CD4-positive, alpha-beta memory T cell (primary cell): ENCODE measurements at regions of chr16 and their contacts with region 1.

Region 1: GRCh38 chr16:31073968-31074813 is at the starts of genes ZNF646 and ZNF668:
- DNase-seq: peak; percentile 94 to 99 (median 98)
- H3K4me3 ChIP-seq: peak within 1 kb of the TSS; percentile 81 to 86
- H3K4me3 Mint-ChIP-seq: peak within 1 kb of the TSS; percentile 92 to 99 (median 97)
- H3K27ac ChIP-seq: peak within 1 kb of the TSS; percentile 87
- H3K27ac Mint-ChIP-seq: peak within 1 kb of the TSS; percentile 93 to 99 (median 98)
- H3K4me1 ChIP-seq: peaks cover 27% of the 10 kb centered on the region
- H3K4me1 Mint-ChIP-seq: peaks cover 20 to 58% (median 30%) of the 10 kb centered on the region in 4 donors
- H3K27me3 ChIP-seq: no peaks in the 10 kb centered on the region
- H3K27me3 Mint-ChIP-seq: peaks cover 0 to 2% of the 10 kb centered on the region in 2 donors
- total RNA-seq, gene ZNF646: 46.9 to 47.0 TPM
- total RNA-seq, gene ZNF668: 11.7 to 13.6 TPM

Region 2: DNA sequence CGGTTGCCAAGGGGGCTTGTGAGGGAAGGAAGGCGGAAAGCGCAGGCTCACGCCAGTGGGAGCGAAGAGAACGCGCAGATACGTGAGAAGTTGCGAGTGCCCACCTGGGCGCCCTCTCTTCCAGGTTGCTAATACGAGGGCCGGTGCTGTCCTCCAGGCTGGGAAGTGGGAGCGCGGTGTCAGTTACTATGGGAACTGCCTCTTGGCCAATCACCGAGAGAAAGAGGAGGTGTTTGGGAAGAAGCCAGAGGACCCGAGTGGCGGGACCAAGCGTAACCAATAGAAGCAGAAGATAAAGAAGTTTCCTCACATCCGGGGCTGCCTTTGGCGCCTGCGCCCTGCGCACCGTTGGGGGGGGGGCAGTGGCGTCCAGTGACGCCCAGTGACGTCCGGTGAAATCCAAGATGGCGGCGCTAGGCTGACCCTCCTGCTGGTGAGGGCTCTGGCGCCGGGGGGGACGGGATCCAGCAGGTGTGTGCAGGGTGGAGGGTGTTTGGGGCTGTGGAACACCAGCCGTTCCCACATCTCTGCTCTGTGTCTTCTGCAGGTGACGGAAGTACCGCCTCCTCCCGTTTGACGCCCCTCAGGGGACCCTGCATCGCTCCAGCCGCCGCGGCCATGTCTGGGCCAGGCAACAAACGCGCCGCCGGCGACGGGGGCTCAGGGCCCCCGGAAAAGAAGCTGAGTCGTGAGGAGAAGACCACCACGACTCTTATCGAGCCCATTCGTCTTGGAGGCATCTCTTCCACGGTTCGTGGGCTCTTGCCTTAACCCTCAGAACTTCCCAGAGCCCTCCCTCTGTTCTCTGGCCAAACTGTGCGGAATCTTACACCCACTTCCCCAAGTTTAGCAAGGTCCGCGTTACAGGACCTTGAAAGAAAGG is 312.0 kb before region 1 on chr16 and contains the starts of genes CFAP119 and RNF40:
- CTCF ChIA-PET with region 1: no interaction called
- POLR2A ChIA-PET with region 1: interaction called, 3 read pairs
- intact Hi-C with region 1: loop called (anchors 1 kb)
- DNase-seq: peak; percentile 89 to 94 (median 91)
- H3K4me3 ChIP-seq: peak within 1 kb of the TSS; percentile 73 to 97
- H3K4me3 Mint-ChIP-seq: peak within 1 kb of the TSS; percentile 94 to 98 (median 97)
- H3K27ac ChIP-seq: peak within 1 kb of the TSS; percentile 71
- H3K27ac Mint-ChIP-seq: peak within 1 kb of the TSS; percentile 94 to 97 (median 96)
- H3K4me1 ChIP-seq: peaks cover 30% of the 10 kb centered on the region
- H3K4me1 Mint-ChIP-seq: peaks cover 11 to 38% (median 27%) of the 10 kb centered on the region in 4 donors
- H3K27me3 ChIP-seq: no peaks in the 10 kb centered on the region
- H3K27me3 Mint-ChIP-seq: no peaks in the 10 kb centered on the region
- total RNA-seq, gene CFAP119: 2.6 to 3.4 TPM
- total RNA-seq, gene RNF40: 101 to 109 TPM

Region 3: DNA sequence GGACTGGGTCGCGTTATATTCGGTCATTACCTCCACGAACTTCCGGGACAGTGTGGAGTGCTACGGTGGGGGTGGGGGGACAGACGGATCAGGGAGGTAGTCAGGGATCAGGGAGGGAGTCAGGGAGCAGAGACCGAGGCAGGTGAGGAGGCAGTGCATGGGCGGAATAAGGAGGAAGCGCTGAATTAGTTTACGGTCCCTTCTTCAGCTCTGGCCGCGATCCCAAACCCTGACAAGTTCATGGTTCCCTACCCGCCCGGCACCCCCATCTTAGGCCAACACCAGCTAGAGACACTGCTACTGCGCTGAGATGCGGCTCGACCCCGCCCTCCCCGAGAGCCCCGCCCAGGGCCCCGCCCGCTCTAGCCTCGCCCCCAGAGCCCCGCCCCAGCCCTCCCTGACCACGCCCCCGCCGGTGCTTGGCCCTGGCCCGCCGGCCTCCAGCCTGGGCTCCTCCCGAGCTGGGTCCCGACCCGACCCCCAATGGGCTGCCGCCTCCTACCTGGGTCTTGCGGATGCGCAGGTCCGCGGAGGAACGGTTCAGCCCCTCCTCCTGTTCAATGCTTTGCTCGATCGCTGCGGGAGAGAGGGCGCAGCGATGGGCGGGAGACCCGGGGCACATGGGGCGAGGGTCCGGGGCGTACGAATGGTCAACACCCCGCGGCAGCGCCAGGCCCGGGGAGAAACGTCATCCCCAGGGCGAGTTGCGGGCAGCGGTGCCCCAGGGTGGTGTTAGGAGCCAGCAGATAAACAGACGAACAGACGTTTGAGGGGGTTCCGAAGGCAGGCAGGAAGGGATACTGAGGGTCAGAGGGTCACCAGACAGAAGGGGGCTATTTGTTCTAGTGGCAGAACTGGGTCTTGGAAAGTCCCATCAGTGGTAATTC is 76.9 kb before region 1 on chr16:
- CTCF ChIA-PET with region 1: no interaction called
- POLR2A ChIA-PET with region 1: interaction called, 5 read pairs
- intact Hi-C with region 1: loop called (anchors 1 kb)
- DNase-seq: peak; percentile 59 to 82 (median 66)
- H3K4me3 ChIP-seq: peak overlapping the region; percentile 60 to 69
- H3K4me3 Mint-ChIP-seq: peak overlapping the region; percentile 67 to 86 (median 82)
- H3K27ac ChIP-seq: peak overlapping the region; percentile 47
- H3K27ac Mint-ChIP-seq: peak overlapping the region in 6 of 7 donors; percentile 54 to 89 (median 85)
- H3K4me1 ChIP-seq: peaks cover 11% of the 10 kb centered on the region
- H3K4me1 Mint-ChIP-seq: peaks cover 2 to 6% (median 4%) of the 10 kb centered on the region in 4 donors
- H3K27me3 ChIP-seq: no peaks in the 10 kb centered on the region
- H3K27me3 Mint-ChIP-seq: no peaks in the 10 kb centered on the region

Region 4: DNA sequence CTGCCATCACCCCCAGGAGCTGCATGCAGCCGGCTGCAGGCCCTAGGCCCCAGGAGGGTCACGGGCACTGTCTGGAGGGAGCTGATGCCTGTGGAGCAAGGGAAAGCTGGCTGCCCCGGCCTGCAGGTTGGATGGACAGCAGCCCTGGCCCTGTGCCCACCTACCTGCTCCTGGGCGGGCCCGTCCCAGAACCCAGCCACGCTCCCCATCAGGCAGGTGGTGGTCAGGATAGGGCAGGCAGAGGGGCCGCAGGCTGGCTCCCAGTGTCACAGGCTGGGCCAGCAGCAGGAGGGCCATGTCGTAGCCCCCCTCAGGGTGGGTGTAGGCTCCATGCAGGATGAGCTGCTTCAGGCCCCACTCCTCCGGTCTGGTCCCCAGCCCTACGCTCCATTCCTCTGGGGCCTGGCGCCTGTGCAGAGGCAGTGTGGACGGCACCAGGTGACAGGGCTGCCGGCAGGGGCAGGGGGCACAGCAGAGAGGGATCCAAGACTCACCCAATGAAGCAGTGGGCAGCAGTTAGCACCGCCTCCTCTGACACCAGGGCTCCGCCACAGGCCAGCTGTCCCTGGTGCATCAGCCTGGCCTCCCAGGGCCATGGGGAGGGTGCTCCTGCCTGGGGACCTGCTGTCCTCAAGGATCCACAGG is 10.5 kb after region 1 on chr16:
- CTCF ChIA-PET with region 1: no interaction called
- POLR2A ChIA-PET with region 1: interaction called, 12 read pairs
- intact Hi-C with region 1: no loop called
- DNase-seq: no peak
- H3K4me3 ChIP-seq: no peak overlapping the region
- H3K4me3 Mint-ChIP-seq: no peak overlapping the region
- H3K27ac ChIP-seq: no peak overlapping the region
- H3K27ac Mint-ChIP-seq: no peak overlapping the region
- H3K4me1 ChIP-seq: peaks cover 10% of the 10 kb centered on the region
- H3K4me1 Mint-ChIP-seq: peaks cover 0 to 14% (median 8%) of the 10 kb centered on the region in 4 donors
- H3K27me3 ChIP-seq: no peaks in the 10 kb centered on the region
- H3K27me3 Mint-ChIP-seq: no peaks in the 10 kb centered on the region

Region 5: DNA sequence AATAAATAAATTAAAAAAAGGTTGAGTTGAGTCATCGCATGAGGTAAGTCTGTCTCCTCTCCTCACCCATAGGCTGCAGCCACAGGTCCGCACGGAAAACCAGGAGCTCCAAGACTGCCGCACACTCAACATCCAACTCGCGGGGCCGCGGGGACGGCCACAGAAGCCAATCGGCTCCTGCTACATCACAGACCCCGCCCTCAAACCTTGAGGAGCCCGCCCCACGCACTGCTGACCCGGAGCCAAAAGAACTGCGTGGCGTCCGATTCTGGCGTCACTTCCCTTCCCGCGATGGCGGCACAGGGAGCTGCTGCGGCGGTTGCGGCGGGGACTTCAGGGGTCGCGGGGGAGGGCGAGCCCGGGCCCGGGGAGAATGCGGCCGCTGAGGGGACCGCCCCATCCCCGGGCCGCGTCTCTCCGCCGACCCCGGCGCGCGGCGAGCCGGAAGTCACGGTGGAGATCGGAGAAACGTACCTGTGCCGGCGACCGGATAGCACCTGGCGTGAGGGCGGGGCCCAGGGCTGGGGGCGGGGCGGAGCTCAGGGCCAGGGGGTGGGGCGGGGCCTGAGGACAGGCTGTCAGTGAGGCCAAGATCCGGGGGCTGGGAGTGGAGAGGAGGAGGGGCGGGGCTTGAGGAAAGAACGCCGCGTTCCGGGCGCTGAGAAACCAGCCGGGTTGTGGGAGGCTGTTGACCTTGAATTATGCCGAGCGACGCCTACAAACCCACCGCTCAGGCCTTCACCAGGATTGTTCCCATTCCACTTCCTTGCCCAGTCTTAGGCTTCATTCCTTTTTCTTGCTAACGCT is 43.4 kb after region 1 on chr16 and contains the start of gene KAT8:
- CTCF ChIA-PET with region 1: interaction called, 6 read pairs
- POLR2A ChIA-PET with region 1: interaction called, 68 read pairs
- intact Hi-C with region 1: loop called (anchors 1 kb)
- DNase-seq: peak; percentile 98 to 99 (median 98)
- H3K4me3 ChIP-seq: peak within 1 kb of the TSS; percentile 63 to 76
- H3K4me3 Mint-ChIP-seq: peak within 1 kb of the TSS; percentile 83 to 93 (median 89)
- H3K27ac ChIP-seq: peak within 1 kb of the TSS; percentile 89
- H3K27ac Mint-ChIP-seq: peak within 1 kb of the TSS; percentile 80 to 98 (median 95)
- H3K4me1 ChIP-seq: peaks cover 11% of the 10 kb centered on the region
- H3K4me1 Mint-ChIP-seq: peaks cover 9 to 19% (median 13%) of the 10 kb centered on the region in 4 donors
- H3K27me3 ChIP-seq: no peaks in the 10 kb centered on the region
- H3K27me3 Mint-ChIP-seq: no peaks in the 10 kb centered on the region
- total RNA-seq, gene KAT8: 90.8 to 94.2 TPM

Region 6: GRCh38 chr16:31253642-31254045 is 179.5 kb after region 1 on chr16:
- CTCF ChIA-PET with region 1: no interaction called
- POLR2A ChIA-PET with region 1: no interaction called
- intact Hi-C with region 1: no loop called
- DNase-seq: no peak
- H3K4me3 ChIP-seq: no peak overlapping the region
- H3K4me3 Mint-ChIP-seq: no peak overlapping the region
- H3K27ac ChIP-seq: no peak overlapping the region
- H3K27ac Mint-ChIP-seq: peak overlapping the region in 4 of 7 donors; percentile 0 to 64 (median 30)
- H3K4me1 ChIP-seq: peaks cover 8% of the 10 kb centered on the region
- H3K4me1 Mint-ChIP-seq: peaks cover 11 to 21% (median 13%) of the 10 kb centered on the region in 4 donors
- H3K27me3 ChIP-seq: no peaks in the 10 kb centered on the region
- H3K27me3 Mint-ChIP-seq: no peaks in the 10 kb centered on the region